Caco-2 (cell line): ENCODE measurements at regions of chr2 and their contacts with region 1.

Region 1: DNA sequence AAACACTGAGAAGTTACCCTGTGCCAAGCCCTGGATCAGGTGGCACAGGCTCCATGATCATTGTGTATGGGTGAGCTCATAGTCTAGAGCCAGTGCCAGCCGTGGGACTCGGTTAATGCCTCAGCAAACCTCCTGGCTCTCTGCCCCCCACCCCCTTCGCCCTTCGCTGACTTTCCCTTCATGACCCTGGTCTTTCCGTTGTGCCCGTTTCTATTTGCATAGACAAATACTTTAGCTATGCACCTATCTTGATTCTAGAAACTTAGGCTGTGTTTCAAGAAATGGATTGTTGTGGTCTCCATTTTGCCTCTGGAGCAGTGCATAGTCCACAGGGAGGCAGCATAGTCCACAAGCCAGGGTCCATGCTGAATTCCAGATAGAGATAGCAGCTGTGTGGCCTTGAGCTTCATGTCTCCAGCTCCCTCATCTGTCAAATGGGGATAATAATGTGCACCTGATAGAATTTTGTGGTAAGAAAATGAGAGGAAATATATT is 44.8 kb upstream of the KDM3A start:
- DNase-seq: peak; percentile 54 to 61
- H3K4me3 ChIP-seq: no peak overlapping the region
- H3K4me3 Mint-ChIP-seq: no peak overlapping the region
- H3K27ac Mint-ChIP-seq: no peak overlapping the region
- H3K4me1 ChIP-seq: peaks cover 22% of the 10 kb centered on the region
- H3K4me1 Mint-ChIP-seq: peaks cover 10% of the 10 kb centered on the region
- H3K27me3 ChIP-seq: no peaks in the 10 kb centered on the region
- H3K27me3 Mint-ChIP-seq: no peaks in the 10 kb centered on the region
- CTCF ChIP-seq: peak; percentile 19 to 36

Region 2: DNA sequence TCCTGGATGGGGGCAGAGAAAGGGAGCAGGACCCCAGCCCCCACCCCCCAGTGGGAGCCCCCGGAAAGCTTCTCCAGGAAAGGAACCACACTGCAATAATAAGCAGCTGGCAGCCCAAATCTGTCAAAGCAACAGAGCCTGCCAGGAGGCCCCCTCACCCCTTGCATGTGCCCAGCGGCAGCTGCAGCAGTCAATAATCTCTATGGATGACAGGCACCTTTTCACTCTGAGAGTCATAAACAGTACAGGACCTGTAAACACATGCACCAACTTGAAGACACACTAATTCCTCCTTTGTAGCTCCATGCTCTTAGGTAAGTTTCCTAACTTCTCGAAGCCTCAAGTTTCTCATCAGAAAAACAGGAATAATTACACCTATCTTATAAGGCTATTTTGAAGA is 18.7 kb after region 1 on chr2:
- CTCF ChIA-PET with region 1: no interaction called
- POLR2A ChIA-PET with region 1: no interaction called
- intact Hi-C with region 1: no loop called
- DNase-seq: no peak
- H3K4me3 ChIP-seq: no peak overlapping the region
- H3K4me3 Mint-ChIP-seq: no peak overlapping the region
- H3K27ac Mint-ChIP-seq: no peak overlapping the region
- H3K4me1 ChIP-seq: no peaks in the 10 kb centered on the region
- H3K4me1 Mint-ChIP-seq: no peaks in the 10 kb centered on the region
- H3K27me3 ChIP-seq: no peaks in the 10 kb centered on the region
- H3K27me3 Mint-ChIP-seq: peaks cover 14% of the 10 kb centered on the region
- CTCF ChIP-seq: no peak

Region 3: GRCh38 chr2:86440631-86441391 is 44.5 kb after region 1 on chr2 and contains the start of gene KDM3A:
- CTCF ChIA-PET with region 1: interaction called, 15 read pairs
- POLR2A ChIA-PET with region 1: interaction called, 10 read pairs
- intact Hi-C with region 1: no loop called
- DNase-seq: peak; percentile 100
- H3K4me3 ChIP-seq: peak within 1 kb of the TSS; percentile 99
- H3K4me3 Mint-ChIP-seq: peak within 1 kb of the TSS; percentile 83
- H3K27ac Mint-ChIP-seq: peak within 1 kb of the TSS; percentile 96
- H3K4me1 ChIP-seq: no peaks in the 10 kb centered on the region
- H3K4me1 Mint-ChIP-seq: peaks cover 18% of the 10 kb centered on the region
- H3K27me3 ChIP-seq: no peaks in the 10 kb centered on the region
- H3K27me3 Mint-ChIP-seq: peaks cover 8% of the 10 kb centered on the region
- CTCF ChIP-seq: no peak
- total RNA-seq, gene KDM3A: 47.4 and 52.4 TPM in 2 replicates

Region 4: DNA sequence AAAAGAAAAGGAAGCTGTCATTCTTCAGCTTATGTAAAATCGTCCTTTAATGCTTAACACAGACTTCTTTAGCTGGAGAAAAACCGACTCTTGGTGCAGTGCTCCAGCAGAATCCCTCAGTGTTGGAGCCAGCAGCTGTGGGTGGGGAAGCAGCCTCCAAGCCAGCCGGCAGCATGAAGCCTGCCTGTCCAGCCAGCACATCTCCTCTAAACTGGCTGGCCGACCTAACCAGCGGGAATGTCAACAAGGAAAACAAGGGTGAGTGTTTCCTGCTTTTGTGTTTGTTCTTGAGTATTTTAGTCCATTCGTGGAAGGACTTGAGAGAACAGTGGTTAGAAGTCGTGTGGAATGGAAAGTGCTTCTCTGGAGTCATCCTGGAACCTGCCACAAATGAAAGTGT is 83.8 kb after region 1 on chr2:
- CTCF ChIA-PET with region 1: interaction called, 3 read pairs
- POLR2A ChIA-PET with region 1: no interaction called
- intact Hi-C with region 1: loop called (anchors 10 kb)
- DNase-seq: no peak
- H3K4me3 ChIP-seq: no peak overlapping the region
- H3K4me3 Mint-ChIP-seq: no peak overlapping the region
- H3K27ac Mint-ChIP-seq: no peak overlapping the region
- H3K4me1 ChIP-seq: no peaks in the 10 kb centered on the region
- H3K4me1 Mint-ChIP-seq: no peaks in the 10 kb centered on the region
- H3K27me3 ChIP-seq: no peaks in the 10 kb centered on the region
- H3K27me3 Mint-ChIP-seq: no peaks in the 10 kb centered on the region
- CTCF ChIP-seq: no peak

Region 5: DNA sequence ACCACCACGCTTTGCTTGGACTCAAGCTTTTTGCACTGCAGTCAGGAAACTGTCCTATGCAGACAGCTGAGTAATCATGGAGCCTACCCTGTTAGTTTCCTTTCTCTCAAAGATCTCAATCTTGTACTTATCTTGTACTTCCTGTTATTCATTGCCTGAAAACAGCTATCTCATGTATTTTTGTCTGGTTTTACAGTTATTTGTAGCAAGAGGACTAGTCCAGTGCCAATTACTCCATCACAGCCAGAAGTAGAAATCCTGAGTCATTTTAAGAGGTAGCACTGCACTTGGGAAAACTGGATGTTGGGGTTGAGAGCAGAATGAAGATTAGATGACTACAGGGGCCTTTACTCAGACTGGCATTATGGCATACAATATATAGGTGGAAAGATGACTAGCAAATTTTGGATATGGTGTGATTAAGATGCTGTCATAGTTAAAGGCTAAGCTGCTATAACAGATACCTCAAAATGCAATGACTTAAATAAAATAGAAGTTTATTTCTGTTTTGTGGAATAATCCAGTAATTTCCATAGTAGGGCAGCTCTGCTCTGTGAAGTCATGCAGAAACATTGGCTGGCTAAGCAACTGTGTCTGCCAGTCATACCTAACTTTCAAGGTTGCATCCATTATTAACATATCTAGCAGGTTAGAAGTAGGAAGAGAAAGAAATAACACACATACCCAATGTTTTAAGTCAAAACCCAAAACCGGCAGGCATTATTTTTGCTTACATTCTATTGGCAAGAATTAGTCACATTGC is 188.0 kb after region 1 on chr2:
- CTCF ChIA-PET with region 1: no interaction called
- POLR2A ChIA-PET with region 1: interaction called, 13 read pairs
- intact Hi-C with region 1: no loop called
- DNase-seq: no peak
- H3K4me3 ChIP-seq: no peak overlapping the region
- H3K4me3 Mint-ChIP-seq: no peak overlapping the region
- H3K27ac Mint-ChIP-seq: no peak overlapping the region
- H3K4me1 ChIP-seq: no peaks in the 10 kb centered on the region
- H3K4me1 Mint-ChIP-seq: no peaks in the 10 kb centered on the region
- H3K27me3 ChIP-seq: no peaks in the 10 kb centered on the region
- H3K27me3 Mint-ChIP-seq: peaks cover 18% of the 10 kb centered on the region
- CTCF ChIP-seq: no peak

Region 6: DNA sequence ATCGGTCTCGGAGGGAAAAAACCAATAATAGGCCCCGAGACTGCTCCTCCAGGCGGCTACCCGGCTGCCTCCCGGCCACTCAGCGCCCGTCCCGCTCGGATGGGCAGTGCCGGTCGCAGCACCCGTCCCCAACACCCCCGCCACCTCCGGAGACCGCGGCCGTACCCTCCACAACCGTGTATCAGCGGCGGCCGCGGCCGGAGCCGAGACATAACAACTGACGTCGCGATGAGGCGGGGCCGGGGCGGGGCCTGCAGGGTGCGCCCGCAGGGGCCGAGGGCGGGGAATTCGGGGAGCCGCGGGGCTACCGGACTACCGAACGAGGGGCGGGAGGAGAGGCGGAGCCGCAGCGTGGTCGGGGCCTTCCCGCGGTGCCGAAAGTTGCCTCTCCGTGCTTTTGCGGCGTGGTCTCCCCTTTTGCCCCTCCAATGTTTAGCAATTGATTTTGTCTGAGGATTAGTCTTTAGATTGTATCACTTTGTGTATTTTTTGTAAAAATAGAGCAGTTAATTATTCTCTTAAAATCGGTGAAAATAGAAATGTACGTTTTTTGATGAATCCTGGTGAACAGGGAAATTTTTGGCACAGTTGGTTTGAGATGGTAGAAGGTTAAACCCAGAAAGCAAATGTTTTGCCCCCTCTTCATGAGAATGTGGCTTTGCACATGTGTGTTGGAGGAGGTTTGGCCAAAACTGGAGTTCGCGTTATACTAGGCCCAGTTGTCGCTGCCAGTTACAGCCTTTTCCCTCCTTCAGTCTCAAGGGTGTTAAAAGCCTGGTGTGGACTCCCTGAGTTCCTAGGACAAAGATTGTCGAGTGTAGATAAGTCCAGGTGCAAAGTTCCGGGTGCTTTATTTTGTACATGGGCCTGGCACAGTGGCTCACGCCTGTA is 227.6 kb after region 1 on chr2 and contains the start of gene RNF103:
- CTCF ChIA-PET with region 1: no interaction called
- POLR2A ChIA-PET with region 1: interaction called, 7 read pairs
- intact Hi-C with region 1: loop called (anchors 10 kb)
- DNase-seq: peak; percentile 95 to 97
- H3K4me3 ChIP-seq: peak within 1 kb of the TSS; percentile 89
- H3K4me3 Mint-ChIP-seq: peak within 1 kb of the TSS; percentile 95
- H3K27ac Mint-ChIP-seq: peak within 1 kb of the TSS; percentile 97
- H3K4me1 ChIP-seq: peaks cover 19% of the 10 kb centered on the region
- H3K4me1 Mint-ChIP-seq: peaks cover 24% of the 10 kb centered on the region
- H3K27me3 ChIP-seq: no peaks in the 10 kb centered on the region
- H3K27me3 Mint-ChIP-seq: no peaks in the 10 kb centered on the region
- CTCF ChIP-seq: no peak
- total RNA-seq, gene RNF103: 20.0 and 21.8 TPM in 2 replicates

Region 7: GRCh38 chr2:86675511-86676015 is 279.2 kb after region 1 on chr2:
- CTCF ChIA-PET with region 1: interaction called, 4 read pairs
- POLR2A ChIA-PET with region 1: no interaction called
- intact Hi-C with region 1: loop called (anchors 1 kb)
- DNase-seq: peak; percentile 42 to 44
- H3K4me3 ChIP-seq: no peak overlapping the region
- H3K4me3 Mint-ChIP-seq: no peak overlapping the region
- H3K27ac Mint-ChIP-seq: no peak overlapping the region
- H3K4me1 ChIP-seq: peaks cover 19% of the 10 kb centered on the region
- H3K4me1 Mint-ChIP-seq: peaks cover 19% of the 10 kb centered on the region
- H3K27me3 ChIP-seq: no peaks in the 10 kb centered on the region
- H3K27me3 Mint-ChIP-seq: no peaks in the 10 kb centered on the region
- CTCF ChIP-seq: peak; percentile 42 to 65

Region 8: DNA sequence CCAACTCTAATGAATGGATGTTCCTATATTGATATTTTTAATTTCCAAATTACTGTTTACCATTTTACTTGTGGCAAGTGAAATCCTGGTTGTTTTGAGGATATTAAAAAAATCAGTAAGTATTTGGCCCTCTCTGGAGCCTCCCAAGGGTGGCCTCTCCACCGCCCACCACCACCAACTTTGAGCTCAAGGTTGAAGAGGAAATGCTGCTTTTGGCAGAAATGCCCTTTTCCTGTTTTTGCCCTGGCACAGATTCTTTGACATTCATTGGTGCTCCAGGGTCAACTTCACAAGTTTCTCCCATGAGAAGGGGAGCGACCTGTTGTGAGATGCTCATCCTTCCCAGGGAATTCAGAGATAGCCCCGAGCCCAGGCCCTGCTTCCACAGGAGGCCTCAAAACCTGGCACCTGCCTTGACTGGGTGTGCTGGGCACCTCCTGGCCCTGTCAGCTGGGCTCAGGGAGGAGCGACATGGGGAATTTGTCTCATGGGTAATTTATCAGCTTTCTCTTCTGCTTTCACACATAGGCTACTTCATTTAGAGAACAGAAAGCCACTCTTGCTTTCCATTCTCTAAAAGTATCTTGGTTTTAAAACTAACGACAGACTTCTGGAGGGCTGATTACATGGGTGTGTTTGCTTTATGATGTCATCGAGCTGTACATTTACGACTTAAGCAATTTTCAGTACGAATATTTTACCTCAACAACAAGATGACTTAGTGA is 387.4 kb after region 1 on chr2:
- CTCF ChIA-PET with region 1: no interaction called
- POLR2A ChIA-PET with region 1: no interaction called
- intact Hi-C with region 1: loop called (anchors 10 kb)
- DNase-seq: no peak
- H3K4me3 ChIP-seq: no peak overlapping the region
- H3K4me3 Mint-ChIP-seq: no peak overlapping the region
- H3K27ac Mint-ChIP-seq: no peak overlapping the region
- H3K4me1 ChIP-seq: no peaks in the 10 kb centered on the region
- H3K4me1 Mint-ChIP-seq: no peaks in the 10 kb centered on the region
- H3K27me3 ChIP-seq: no peaks in the 10 kb centered on the region
- H3K27me3 Mint-ChIP-seq: no peaks in the 10 kb centered on the region
- CTCF ChIP-seq: no peak